AG04449 (cell line): ENCODE measurements at regions of chr5 and their contacts with region 1.

Region 1: DNA sequence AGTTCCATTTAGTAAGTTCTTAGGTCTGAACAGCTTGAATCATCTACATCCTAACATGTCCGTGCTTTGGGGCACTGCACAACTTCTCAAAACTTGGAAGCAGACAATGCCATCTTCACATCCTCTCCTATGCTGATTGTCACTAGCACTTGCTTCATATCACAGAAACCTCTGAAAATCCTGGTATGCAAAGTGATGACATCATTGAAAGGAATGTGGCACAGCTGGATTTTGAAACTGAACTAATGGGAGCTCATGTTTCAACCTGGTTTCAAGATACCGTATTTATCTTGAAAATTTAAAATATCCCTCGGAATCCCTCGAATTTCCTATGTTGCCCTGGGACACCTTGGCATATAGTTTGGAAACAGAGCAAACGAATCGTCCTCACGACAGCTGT is 490.2 kb upstream of the DAP start:
- DNase-seq: no peak
- H3K4me3 ChIP-seq: no peak overlapping the region
- CTCF ChIP-seq: no peak

Region 2: GRCh38 chr5:11182441-11183268 is 68.6 kb before region 1 on chr5:
- CTCF ChIA-PET with region 1: no interaction called
- POLR2A ChIA-PET with region 1: no interaction called
- DNase-seq: peak; percentile 2
- H3K4me3 ChIP-seq: no peak overlapping the region
- CTCF ChIP-seq: peak; percentile 50

Region 3: DNA sequence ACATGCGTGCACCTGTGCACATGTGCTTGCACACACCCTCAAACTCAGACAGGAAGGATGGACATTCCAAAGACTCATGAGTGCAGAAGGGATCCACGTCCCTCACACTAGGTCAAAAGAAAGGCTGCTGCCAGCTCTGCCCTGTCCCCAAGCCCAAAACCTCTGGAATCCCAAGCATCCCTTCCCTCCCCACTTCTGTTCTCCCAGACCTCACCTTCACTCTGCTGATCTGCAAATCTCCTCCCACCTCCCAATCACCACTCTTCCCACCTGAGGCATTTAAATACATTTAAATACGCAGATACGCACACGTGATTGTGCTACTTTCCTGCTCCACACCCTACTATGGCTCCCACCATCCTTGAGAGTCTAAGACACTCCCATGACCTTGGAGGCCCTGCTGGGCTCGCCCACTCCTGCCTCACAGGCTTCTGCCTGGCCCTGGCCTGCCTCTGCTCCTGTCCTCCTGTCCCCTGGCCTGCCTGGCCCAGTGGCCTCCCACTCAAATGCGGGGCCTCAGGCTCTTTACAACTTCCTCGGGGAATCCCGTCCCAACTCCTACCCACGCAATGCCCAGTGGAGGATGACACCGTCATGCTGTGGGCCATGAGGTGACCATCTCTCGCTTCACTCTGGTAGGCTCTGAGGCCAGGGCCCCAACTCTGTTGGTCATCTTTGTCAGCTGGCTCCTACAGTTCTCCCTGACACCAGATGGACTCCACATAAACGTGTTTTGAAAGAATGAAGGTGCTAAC is 11.8 kb before region 1 on chr5:
- CTCF ChIA-PET with region 1: no interaction called
- POLR2A ChIA-PET with region 1: no interaction called
- DNase-seq: no peak
- H3K4me3 ChIP-seq: no peak overlapping the region
- CTCF ChIP-seq: no peak

Region 4: DNA sequence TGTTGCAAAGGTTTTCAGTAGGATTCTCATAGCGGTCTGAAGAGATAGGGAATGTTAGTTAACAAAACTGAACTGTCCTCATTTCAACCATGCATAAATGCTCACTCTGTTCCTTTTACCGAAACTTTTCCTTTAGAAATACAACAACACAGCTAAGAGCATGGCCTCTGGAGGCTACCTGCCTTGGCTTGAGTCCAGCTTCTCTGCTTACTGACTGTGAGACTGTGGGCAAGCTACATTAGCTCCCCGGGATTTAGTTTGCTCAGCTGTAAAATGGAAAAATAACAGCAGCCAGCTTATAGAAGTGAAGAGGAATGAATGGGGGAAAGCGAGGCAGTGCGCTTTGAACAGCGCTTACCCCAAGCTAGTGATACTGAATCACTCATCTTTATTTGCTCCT is 17.6 kb after region 1 on chr5:
- CTCF ChIA-PET with region 1: interaction called, 10 read pairs
- POLR2A ChIA-PET with region 1: no interaction called
- DNase-seq: no peak
- H3K4me3 ChIP-seq: no peak overlapping the region
- CTCF ChIP-seq: no peak